ENCODE measurements at regions of chr20 and their contacts with region 1.

Region 1: GRCh38 chr20:38985603-38986170 is 23.5 kb downstream of the DHX35 start:
- DNase-seq: no peak
- ATAC-seq: peak; percentile 71
- H3K4me3 ChIP-seq: no peak overlapping the region
- H3K27ac ChIP-seq: no peak overlapping the region
- H3K4me1 ChIP-seq: peaks cover 3 to 4% of the 10 kb centered on the region in 2 donors
- H3K27me3 ChIP-seq: no peaks in the 10 kb centered on the region

Region 2: DNA sequence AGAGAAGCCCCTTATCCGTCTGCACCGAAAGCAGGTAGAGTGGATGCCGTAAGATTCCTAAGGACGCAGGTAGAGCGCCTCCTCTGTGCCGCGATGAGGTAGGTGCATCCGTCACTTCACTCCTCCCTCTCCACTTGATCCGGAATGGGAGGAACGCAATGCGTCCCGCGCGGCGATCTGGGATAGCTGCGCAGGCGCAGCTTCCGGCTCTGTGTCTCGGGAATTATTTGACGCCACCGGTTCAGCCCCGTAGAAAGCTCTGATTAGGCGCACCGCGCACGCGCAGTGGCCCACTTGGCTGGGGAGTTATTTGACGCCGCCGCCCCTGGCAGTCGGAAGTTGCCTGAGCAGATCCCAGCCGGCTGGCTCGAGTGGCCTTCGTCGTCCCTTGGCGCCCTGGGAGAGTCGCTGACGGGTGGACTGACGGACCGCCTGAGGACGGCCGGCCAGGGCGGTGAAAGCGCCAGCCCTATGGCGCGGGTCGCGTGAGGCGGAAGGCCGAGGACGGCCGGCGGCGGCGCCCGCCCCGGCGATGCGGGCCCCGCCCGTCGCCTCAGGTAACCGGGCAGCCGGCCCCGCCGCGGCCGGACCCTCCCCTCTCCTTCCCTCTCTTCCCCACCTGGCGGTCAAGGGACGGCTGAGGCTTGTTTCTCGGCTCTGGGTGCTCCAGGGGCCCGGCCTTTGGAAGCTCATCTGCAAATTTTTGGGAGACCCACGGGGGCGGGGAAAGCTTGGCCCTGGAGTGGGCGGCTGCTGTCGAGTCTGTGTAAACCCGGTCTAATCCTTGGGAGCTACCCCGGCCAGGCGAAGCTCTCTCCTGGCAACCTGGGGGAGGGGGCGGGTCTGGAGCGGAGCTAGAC is 512.9 kb before region 1 on chr20 and contains the start of gene RALGAPB:
- intact Hi-C with region 1: no loop called
- DNase-seq: peak; percentile 99 to 100
- ATAC-seq: peak; percentile 99
- H3K4me3 ChIP-seq: peak within 1 kb of the TSS; percentile 84 to 89
- H3K27ac ChIP-seq: peak within 1 kb of the TSS; percentile 37 to 72
- H3K4me1 ChIP-seq: no peaks in the 10 kb centered on the region
- H3K27me3 ChIP-seq: no peaks in the 10 kb centered on the region
- total RNA-seq, gene RALGAPB: 35.5 to 41.3 TPM

Region 3: GRCh38 chr20:39036011-39036410 is 50.3 kb after region 1 on chr20:
- intact Hi-C with region 1: loop called in 1 of 2 experiments (anchors 10 kb)
- DNase-seq: no peak
- ATAC-seq: no peak
- H3K4me3 ChIP-seq: no peak overlapping the region
- H3K27ac ChIP-seq: no peak overlapping the region
- H3K4me1 ChIP-seq: no peaks in the 10 kb centered on the region
- H3K27me3 ChIP-seq: no peaks in the 10 kb centered on the region